ENCODE measurements at regions of chr19 and their contacts with region 1.

Region 1: GRCh38 chr19:11699931-11700794 is 38.6 kb downstream of the ZNF823 start:
- DNase-seq: peak; percentile 59
- H3K4me3 ChIP-seq: no peak overlapping the region; a peak in 1 of 4 replicates
- H3K27ac ChIP-seq: no peak overlapping the region
- H3K4me1 ChIP-seq: peaks cover 0 to under 1% of the 10 kb centered on the region in 2 experiments; a peak in 2 of 4 replicates
- H3K27me3 ChIP-seq: no peaks in the 10 kb centered on the region
- CTCF ChIP-seq: peak; percentile 79
- EP300 ChIP-seq: no peak
- RAD21 ChIP-seq: peak; percentile 62

Region 2: GRCh38 chr19:11519138-11519537 is 181.0 kb before region 1 on chr19:
- CTCF ChIA-PET with region 1: no interaction called
- POLR2A ChIA-PET with region 1: no interaction called
- DNase-seq: no peak
- H3K4me3 ChIP-seq: no peak overlapping the region
- H3K27ac ChIP-seq: no peak overlapping the region
- H3K4me1 ChIP-seq: no peaks in the 10 kb centered on the region
- H3K27me3 ChIP-seq: no peaks in the 10 kb centered on the region
- CTCF ChIP-seq: no peak
- EP300 ChIP-seq: no peak
- RAD21 ChIP-seq: no peak

Region 3: DNA sequence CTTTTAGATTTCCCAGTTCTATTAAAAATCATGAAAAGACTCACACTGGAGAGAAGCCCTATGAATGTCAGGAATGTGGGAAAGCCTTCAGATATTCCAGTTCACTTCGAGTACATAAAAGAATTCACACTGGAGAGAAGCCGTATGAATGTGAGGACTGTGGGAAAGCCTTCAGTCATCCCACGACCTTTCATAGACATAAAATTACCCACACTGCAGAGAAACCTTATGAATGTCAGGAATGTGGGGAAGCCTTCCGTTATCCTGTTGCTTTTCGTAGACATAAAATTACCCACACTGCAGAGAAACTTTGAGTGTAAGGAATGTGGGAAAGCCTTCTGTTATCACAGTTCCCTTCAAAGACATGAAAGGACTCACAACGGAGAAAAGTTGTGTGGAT is 47.7 kb before region 1 on chr19:
- CTCF ChIA-PET with region 1: no interaction called
- POLR2A ChIA-PET with region 1: no interaction called
- DNase-seq: no peak
- H3K4me3 ChIP-seq: no peak overlapping the region
- H3K27ac ChIP-seq: no peak overlapping the region
- H3K4me1 ChIP-seq: no peaks in the 10 kb centered on the region
- H3K27me3 ChIP-seq: no peaks in the 10 kb centered on the region
- CTCF ChIP-seq: no peak
- EP300 ChIP-seq: no peak
- RAD21 ChIP-seq: no peak

Region 4: GRCh38 chr19:11685676-11686650 is 14.2 kb before region 1 on chr19:
- CTCF ChIA-PET with region 1: interaction called, 17 read pairs
- POLR2A ChIA-PET with region 1: no interaction called
- DNase-seq: no peak
- H3K4me3 ChIP-seq: no peak overlapping the region
- H3K27ac ChIP-seq: no peak overlapping the region
- H3K4me1 ChIP-seq: no peaks in the 10 kb centered on the region
- H3K27me3 ChIP-seq: no peaks in the 10 kb centered on the region
- CTCF ChIP-seq: no peak
- EP300 ChIP-seq: no peak
- RAD21 ChIP-seq: no peak

Region 5: GRCh38 chr19:11722414-11722813 is 22.3 kb after region 1 on chr19:
- CTCF ChIA-PET with region 1: interaction called, 22 read pairs
- POLR2A ChIA-PET with region 1: no interaction called
- DNase-seq: no peak
- H3K4me3 ChIP-seq: peak overlapping the region in 1 of 2 experiments; percentile 17; a peak in 1 of 4 replicates
- H3K27ac ChIP-seq: no peak overlapping the region
- H3K4me1 ChIP-seq: no peaks in the 10 kb centered on the region
- H3K27me3 ChIP-seq: no peaks in the 10 kb centered on the region
- CTCF ChIP-seq: no peak
- EP300 ChIP-seq: no peak
- RAD21 ChIP-seq: no peak

Region 6: GRCh38 chr19:11738746-11739620 is 38.8 kb after region 1 on chr19 and contains the start of gene ZNF823:
- CTCF ChIA-PET with region 1: interaction called, 19 read pairs
- POLR2A ChIA-PET with region 1: interaction called, 3 read pairs
- DNase-seq: peak; percentile 95
- H3K4me3 ChIP-seq: peak within 1 kb of the TSS; percentile 82 to 89
- H3K27ac ChIP-seq: peak within 1 kb of the TSS; percentile 63 to 94
- H3K4me1 ChIP-seq: peaks cover 9 to 13% of the 10 kb centered on the region in 2 experiments; a peak in 2 of 4 replicates
- H3K27me3 ChIP-seq: no peaks in the 10 kb centered on the region
- CTCF ChIP-seq: no peak
- EP300 ChIP-seq: no peak
- RAD21 ChIP-seq: no peak
- polyA plus RNA-seq, gene ZNF823: 1.5 and 2.2 TPM in 2 replicates

Measured in SK-N-SH (cell line).